ENCODE measurements at regions of chr5 and their contacts with region 1.

Region 1: GRCh38 chr5:156893517-156893916 is 43.4 kb downstream of the PPP1R2B start:
- DNase-seq: peak; percentile 86
- H3K4me3 ChIP-seq: peak overlapping the region; percentile 19
- H3K27ac ChIP-seq: peak overlapping the region; percentile 92
- H3K4me1 ChIP-seq: peaks cover 76% of the 10 kb centered on the region
- CTCF ChIP-seq: no peak

Region 2: GRCh38 chr5:156812959-156813358 is 80.6 kb before region 1 on chr5:
- CTCF ChIA-PET with region 1: no interaction called
- POLR2A ChIA-PET with region 1: no interaction called
- intact Hi-C with region 1: no loop called
- DNase-seq: no peak
- H3K4me3 ChIP-seq: no peak overlapping the region
- H3K27ac ChIP-seq: no peak overlapping the region
- H3K4me1 ChIP-seq: peaks cover 11% of the 10 kb centered on the region
- CTCF ChIP-seq: no peak

Region 3: GRCh38 chr5:156879665-156880285 is 13.7 kb before region 1 on chr5:
- CTCF ChIA-PET with region 1: interaction called, 3 read pairs
- POLR2A ChIA-PET with region 1: interaction called, 170 read pairs
- intact Hi-C with region 1: no loop called
- DNase-seq: peak; percentile 89
- H3K4me3 ChIP-seq: peak overlapping the region; percentile 11
- H3K27ac ChIP-seq: peak overlapping the region; percentile 98
- H3K4me1 ChIP-seq: peaks cover 72% of the 10 kb centered on the region
- CTCF ChIP-seq: peak; percentile 47

Region 4: GRCh38 chr5:156913719-156914370 is 20.3 kb after region 1 on chr5:
- CTCF ChIA-PET with region 1: interaction called, 9 read pairs
- POLR2A ChIA-PET with region 1: interaction called, 81 read pairs
- intact Hi-C with region 1: loop called (anchors 1 kb)
- DNase-seq: peak; percentile 92
- H3K4me3 ChIP-seq: peak overlapping the region; percentile 51
- H3K27ac ChIP-seq: peak overlapping the region; percentile 95
- H3K4me1 ChIP-seq: peaks cover 95% of the 10 kb centered on the region
- CTCF ChIP-seq: no peak

Region 5: DNA sequence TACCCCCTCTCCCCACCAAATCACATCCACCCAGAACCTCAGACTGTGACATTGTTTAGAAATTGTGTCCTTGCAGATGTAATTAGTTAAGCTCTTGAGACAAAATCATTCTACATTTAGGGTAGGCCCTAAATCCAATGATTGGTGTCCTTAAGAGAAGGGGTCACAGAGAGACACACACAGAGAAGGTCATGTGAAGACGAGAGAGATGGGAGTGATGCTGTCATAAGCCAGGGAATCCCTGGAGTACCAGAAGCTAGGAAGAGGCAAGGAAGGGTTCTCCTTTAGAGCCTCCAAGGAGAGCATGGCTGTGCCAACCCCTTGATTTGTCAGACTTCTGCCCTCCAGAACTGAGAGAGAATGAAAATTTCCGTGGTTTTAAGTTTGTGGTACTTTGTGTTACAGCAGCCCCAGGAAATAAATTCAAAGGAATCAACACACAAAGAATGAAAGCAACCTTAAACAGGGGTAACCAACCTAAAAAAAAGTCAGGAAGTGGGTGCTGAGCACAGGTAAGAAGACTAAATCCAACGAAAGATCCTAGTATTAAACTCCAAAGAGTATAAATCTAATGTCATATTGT is 35.9 kb after region 1 on chr5:
- CTCF ChIA-PET with region 1: no interaction called
- POLR2A ChIA-PET with region 1: interaction called, 250 read pairs
- intact Hi-C with region 1: loop called (anchors 1 kb)
- DNase-seq: no peak
- H3K4me3 ChIP-seq: no peak overlapping the region
- H3K27ac ChIP-seq: peak overlapping the region; percentile 39
- H3K4me1 ChIP-seq: peaks cover 94% of the 10 kb centered on the region
- CTCF ChIP-seq: no peak

Region 6: GRCh38 chr5:157026789-157027424 is 133.4 kb after region 1 on chr5:
- CTCF ChIA-PET with region 1: interaction called, 3 read pairs
- POLR2A ChIA-PET with region 1: interaction called, 3 read pairs
- intact Hi-C with region 1: loop called (anchors 1 kb)
- DNase-seq: peak; percentile 64
- H3K4me3 ChIP-seq: no peak overlapping the region
- H3K27ac ChIP-seq: no peak overlapping the region
- H3K4me1 ChIP-seq: peaks cover 59% of the 10 kb centered on the region
- CTCF ChIP-seq: peak; percentile 97

Region 7: GRCh38 chr5:157265714-157266285 is 372.3 kb after region 1 on chr5 and contains the start of gene CYFIP2:
- CTCF ChIA-PET with region 1: no interaction called
- POLR2A ChIA-PET with region 1: no interaction called
- intact Hi-C with region 1: loop called (anchors 5 kb)
- DNase-seq: peak; percentile 91
- H3K4me3 ChIP-seq: peak within 1 kb of the TSS; percentile 82
- H3K27ac ChIP-seq: peak within 1 kb of the TSS; percentile 98
- H3K4me1 ChIP-seq: peaks cover 63% of the 10 kb centered on the region
- CTCF ChIP-seq: no peak
- total RNA-seq, gene CYFIP2: 221 and 258 TPM in 2 replicates